ENCODE measurements at regions of chr4 and their contacts with region 1.

Region 1: DNA sequence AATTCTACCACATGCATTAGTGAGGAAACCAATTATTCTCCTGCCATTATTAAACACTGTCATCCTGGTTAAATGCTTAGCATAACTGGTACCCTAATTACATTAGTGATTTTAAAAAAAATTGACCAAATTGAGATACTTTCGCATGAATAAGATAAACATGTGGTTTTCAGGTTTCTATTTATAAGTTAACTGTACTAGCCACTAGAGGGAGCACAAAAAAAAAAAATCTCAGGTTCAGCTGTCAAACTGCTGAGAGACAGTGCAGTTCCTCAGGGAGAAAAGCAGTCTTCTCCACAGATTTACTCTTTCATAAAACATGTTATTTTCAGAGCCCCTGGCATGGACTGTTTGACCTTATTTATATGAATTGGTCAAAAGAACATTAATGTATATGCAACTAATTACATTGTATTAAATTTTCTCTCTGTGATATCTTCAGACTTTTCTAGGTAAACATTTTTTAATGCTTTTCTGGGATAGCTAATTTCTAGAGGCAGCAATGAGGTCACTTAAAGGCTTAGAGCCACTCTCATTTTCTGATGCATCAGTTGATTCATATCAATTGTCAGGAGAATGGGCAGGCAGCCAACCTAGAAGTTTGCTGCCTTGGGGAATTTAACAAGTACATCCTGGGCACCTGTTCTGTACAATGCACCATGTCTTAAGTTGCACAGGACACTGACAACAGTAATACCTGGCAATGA is 167.5 kb downstream of the CDS1 start:
- DNase-seq: no peak
- ATAC-seq: peak; percentile 74

Region 2: GRCh38 chr4:84971319-84971932 is 221.0 kb after region 1 on chr4:
- intact Hi-C with region 1: loop called (anchors 1 kb)
- DNase-seq: no peak
- ATAC-seq: no peak